GM10248 (cell line): ENCODE measurements at regions of chrX and their contacts with region 1.

Region 1: DNA sequence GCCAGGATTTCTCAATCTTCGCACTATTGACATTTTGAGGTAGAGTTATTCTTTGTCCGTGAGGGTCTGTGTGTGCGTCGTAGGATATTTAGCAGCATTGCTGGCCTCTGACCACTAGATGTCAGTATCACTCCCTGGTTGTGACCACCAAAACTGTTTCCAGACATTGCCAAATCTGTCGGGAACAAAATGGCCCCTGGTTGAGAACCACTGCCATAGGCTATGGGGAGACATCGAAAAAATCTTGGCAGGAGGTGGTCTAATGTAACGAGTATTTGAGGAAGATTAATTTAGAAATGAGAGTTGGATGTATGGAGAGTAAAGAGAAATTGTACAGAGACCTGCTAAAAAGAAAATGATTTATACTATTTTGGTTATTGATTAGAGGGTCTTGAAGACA is 108.4 kb downstream of the DOCK11 start:
- DNase-seq: peak; percentile 25
- CTCF ChIP-seq: peak; percentile 62

Region 2: GRCh38 chrX:118459494-118459893 is 144.5 kb before region 1 on chrX:
- CTCF ChIA-PET with region 1: interaction called, 64 read pairs
- POLR2A ChIA-PET with region 1: no interaction called
- DNase-seq: peak; percentile 29
- CTCF ChIP-seq: peak; percentile 30

Region 3: DNA sequence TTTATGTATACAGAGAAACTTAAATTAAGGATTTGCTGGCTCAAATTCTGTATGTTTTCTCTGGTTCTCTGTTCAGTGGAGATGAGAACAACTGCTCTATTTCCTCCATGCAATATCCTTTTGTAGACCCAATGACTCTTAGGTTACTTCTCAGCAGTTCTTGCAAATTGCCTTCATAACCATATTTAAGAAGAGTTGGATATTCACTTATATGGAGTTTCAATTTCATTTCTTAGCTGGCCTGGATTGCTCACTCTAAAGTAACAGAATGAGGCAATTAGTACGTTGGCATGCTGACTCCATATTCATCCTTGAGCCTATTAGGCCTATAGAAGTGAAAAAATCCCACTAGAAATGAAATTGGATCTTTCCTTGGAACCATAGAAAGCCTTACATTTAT is 14.8 kb before region 1 on chrX:
- CTCF ChIA-PET with region 1: interaction called, 12 read pairs
- POLR2A ChIA-PET with region 1: no interaction called
- DNase-seq: no peak
- CTCF ChIP-seq: no peak

Region 4: GRCh38 chrX:118614150-118614549 is 10.2 kb after region 1 on chrX:
- CTCF ChIA-PET with region 1: interaction called, 18 read pairs
- POLR2A ChIA-PET with region 1: no interaction called
- DNase-seq: no peak
- CTCF ChIP-seq: no peak

Region 5: GRCh38 chrX:118807151-118808017 is 203.4 kb after region 1 on chrX:
- CTCF ChIA-PET with region 1: interaction called, 28 read pairs
- POLR2A ChIA-PET with region 1: no interaction called
- DNase-seq: peak; percentile 43
- CTCF ChIP-seq: peak; percentile 55

Region 6: DNA sequence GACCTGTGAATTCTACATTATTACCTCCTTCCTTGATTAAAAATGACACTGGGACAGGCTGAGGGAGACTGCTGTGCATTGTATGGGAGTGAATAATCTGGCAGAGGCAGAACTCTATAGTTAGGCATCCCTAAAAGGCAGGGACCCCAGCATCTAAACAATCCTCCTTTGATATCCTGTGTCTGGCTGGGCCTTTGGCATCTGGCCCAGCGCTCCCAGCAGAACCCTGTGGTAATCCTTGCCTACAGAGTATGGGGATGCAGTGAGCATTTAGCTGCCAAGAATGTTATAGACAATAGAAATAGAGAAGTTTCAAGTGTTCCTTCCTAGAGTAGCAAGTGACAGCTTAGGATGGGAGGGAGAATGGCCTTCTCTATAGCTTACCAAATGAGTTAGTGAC is 258.1 kb after region 1 on chrX:
- CTCF ChIA-PET with region 1: no interaction called
- POLR2A ChIA-PET with region 1: no interaction called
- DNase-seq: no peak
- CTCF ChIP-seq: no peak